ENCODE measurements at regions of chr2 and their contacts with region 1.

Region 1: GRCh38 chr2:68909793-68910674 is 38.8 kb upstream of the BMP10 start:
- DNase-seq: peak; percentile 29 to 65 (median 59)
- ATAC-seq: peak; percentile 52
- H3K4me3 ChIP-seq: no peak overlapping the region
- H3K4me3 Mint-ChIP-seq: no peak overlapping the region
- H3K27ac ChIP-seq: no peak overlapping the region
- H3K27ac Mint-ChIP-seq: peak overlapping the region in 2 of 9 donors; percentile 33 to 80
- H3K4me1 ChIP-seq: peaks cover 28 to 62% of the 10 kb centered on the region in 2 donors
- H3K4me1 Mint-ChIP-seq: peaks cover 22 to 35% (median 26%) of the 10 kb centered on the region in 7 donors
- H3K27me3 ChIP-seq: no peaks in the 10 kb centered on the region
- H3K27me3 Mint-ChIP-seq: no peaks in the 10 kb centered on the region

Region 2: GRCh38 chr2:68157402-68158133 is 752.5 kb before region 1 on chr2 and contains the start of gene PNO1:
- CTCF ChIA-PET with region 1: no interaction called
- POLR2A ChIA-PET with region 1: no interaction called
- intact Hi-C with region 1: loop called in 1 of 2 experiments (anchors 1 kb)
- DNase-seq: peak; percentile 95 to 100 (median 98)
- ATAC-seq: peak; percentile 98
- H3K4me3 ChIP-seq: peak within 1 kb of the TSS; percentile 93
- H3K4me3 Mint-ChIP-seq: peak within 1 kb of the TSS; percentile 84 to 99 (median 94)
- H3K27ac ChIP-seq: peak within 1 kb of the TSS; percentile 87
- H3K27ac Mint-ChIP-seq: peak within 1 kb of the TSS; percentile 96 to 100 (median 99)
- H3K4me1 ChIP-seq: peaks cover 19 to 38% of the 10 kb centered on the region in 2 donors
- H3K4me1 Mint-ChIP-seq: peaks cover 30 to 72% (median 58%) of the 10 kb centered on the region in 7 donors
- H3K27me3 ChIP-seq: no peaks in the 10 kb centered on the region
- H3K27me3 Mint-ChIP-seq: no peaks in the 10 kb centered on the region
- total RNA-seq, gene PNO1: 11.0 to 31.0 (median 12.8) TPM

Region 3: DNA sequence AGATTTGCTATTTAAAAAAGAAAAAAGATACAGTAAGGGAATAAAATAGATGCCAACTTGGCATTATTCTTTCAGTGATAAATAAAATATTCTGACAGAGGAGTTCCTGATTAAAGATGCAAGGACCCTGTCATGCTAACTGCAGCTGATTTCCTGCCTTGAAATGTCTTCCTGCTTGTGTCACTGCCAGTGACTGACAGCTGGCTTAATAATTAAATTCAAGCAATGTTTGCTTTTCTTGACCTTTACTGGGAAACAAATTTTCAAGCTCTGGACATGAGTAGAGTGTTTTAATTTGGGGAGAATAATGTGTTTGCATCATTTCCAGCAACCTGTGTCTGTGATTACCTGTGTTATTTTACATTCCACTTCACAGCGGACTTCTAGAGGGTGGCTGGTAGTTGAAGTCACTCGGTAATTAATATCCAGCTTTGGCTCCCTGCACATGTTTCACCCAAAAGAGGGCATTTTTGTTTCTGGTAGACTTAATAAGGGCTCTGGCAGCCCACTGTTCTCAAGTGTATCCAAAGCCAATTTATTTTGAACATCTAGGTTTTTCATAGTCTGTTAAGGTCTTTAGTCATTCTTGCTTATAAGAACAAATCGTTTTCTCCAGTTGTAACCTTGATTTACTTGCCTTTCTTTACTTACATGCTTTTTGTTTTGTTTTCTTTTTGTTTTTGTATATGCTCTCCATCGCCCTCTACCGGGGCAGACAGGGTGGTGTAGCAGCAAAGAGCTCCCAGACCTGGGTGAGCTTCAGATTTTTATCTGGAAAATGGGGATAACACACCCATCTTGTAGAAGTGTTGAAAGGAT is 315.2 kb before region 1 on chr2:
- CTCF ChIA-PET with region 1: interaction called, 5 read pairs
- POLR2A ChIA-PET with region 1: no interaction called
- intact Hi-C with region 1: loop called in 1 of 2 experiments (anchors 5 kb)
- DNase-seq: peak; percentile 5 to 46 (median 39)
- ATAC-seq: peak; percentile 74
- H3K4me3 ChIP-seq: no peak overlapping the region
- H3K4me3 Mint-ChIP-seq: peak overlapping the region in 3 of 10 donors; percentile 2 to 23 (median 4)
- H3K27ac ChIP-seq: no peak overlapping the region
- H3K27ac Mint-ChIP-seq: peak overlapping the region in 2 of 9 donors; percentile 1 to 5
- H3K4me1 ChIP-seq: no peaks in the 10 kb centered on the region
- H3K4me1 Mint-ChIP-seq: peaks cover 3 to 10% (median 7%) of the 10 kb centered on the region in 7 donors
- H3K27me3 ChIP-seq: no peaks in the 10 kb centered on the region
- H3K27me3 Mint-ChIP-seq: peaks cover 3 to 25% (median 16%) of the 10 kb centered on the region in 5 donors

Region 4: DNA sequence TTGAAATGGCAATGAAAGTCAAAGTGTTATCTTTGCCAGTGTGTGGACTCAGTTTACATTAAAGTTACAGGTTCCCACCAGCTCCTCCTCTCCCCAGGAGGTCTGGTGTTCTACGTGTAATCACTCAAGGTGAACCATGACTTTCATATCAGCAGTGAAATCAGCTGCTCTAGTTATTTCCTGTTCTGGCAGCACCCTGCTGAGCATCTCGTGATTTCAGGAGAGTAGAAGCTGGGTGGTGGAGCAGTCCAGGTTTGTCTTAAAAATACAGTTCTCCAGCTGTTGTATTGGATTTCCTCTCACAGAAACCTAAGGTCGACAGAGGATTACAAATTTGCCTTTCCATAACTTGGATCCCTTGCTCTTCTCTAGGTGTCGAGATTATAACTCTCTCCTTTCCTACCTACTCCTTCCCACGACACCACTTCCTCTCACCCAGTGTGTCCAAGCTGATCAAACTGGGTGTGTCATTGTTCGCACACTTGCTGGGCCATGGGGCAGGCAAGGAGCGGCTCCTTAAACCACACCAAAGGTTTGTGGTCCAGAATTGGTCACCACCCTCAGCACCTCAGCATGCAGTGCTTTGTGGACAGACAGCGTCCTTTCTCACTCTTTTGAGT is 188.4 kb before region 1 on chr2:
- CTCF ChIA-PET with region 1: interaction called, 9 read pairs
- POLR2A ChIA-PET with region 1: interaction called, 6 read pairs
- intact Hi-C with region 1: loop called in 1 of 2 experiments (anchors 1 kb)
- DNase-seq: peak in 7 of 9 donors; percentile 52 to 69 (median 61)
- ATAC-seq: peak; percentile 83
- H3K4me3 ChIP-seq: peak overlapping the region; percentile 9
- H3K4me3 Mint-ChIP-seq: peak overlapping the region; percentile 76 to 91 (median 82)
- H3K27ac ChIP-seq: peak overlapping the region; percentile 68
- H3K27ac Mint-ChIP-seq: peak overlapping the region; percentile 78 to 97 (median 95)
- H3K4me1 ChIP-seq: peaks cover 72 to 87% of the 10 kb centered on the region in 2 donors
- H3K4me1 Mint-ChIP-seq: peaks cover 65 to 96% (median 93%) of the 10 kb centered on the region in 7 donors
- H3K27me3 ChIP-seq: no peaks in the 10 kb centered on the region
- H3K27me3 Mint-ChIP-seq: no peaks in the 10 kb centered on the region

Region 5: DNA sequence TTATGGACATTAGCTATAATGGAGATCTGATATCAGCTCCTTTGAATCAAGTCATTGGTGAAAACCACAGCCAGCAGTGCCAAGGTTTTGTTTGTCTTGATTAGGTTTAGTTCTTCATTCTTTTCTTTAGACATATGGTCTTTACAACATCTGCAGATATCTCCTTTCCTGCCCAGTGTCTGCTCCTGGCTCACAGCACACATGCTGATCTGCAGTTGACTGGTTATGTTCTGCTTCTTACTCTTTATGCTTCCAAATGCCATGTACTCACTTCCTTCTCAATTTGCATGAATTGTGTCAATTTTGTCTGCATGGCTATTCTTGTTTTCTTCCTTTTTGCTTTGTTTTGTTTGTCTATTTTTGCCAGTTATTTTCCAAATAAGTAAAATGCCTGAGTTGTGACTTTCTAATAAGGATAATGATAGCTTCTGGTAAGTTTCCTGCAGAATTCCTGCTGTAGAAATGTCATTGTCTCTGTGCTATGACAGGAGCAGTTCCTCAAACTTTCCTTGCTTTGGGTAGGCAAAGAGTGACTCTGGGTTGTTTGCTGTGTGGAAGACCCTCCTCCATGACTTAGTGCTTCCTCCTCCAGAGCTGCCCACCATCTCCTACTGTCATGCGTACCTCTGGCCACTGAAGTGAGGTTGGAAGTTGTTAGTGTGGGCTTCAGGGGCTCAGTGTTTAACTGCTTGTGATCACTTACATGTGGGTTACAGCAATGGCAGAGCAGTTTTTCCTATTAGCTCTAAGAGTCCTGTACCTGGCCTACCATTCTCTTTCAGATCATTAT is 167.2 kb before region 1 on chr2:
- CTCF ChIA-PET with region 1: interaction called, 64 read pairs
- POLR2A ChIA-PET with region 1: interaction called, 13 read pairs
- intact Hi-C with region 1: loop called in 1 of 2 experiments (anchors 5 kb)
- DNase-seq: no peak
- ATAC-seq: no peak
- H3K4me3 ChIP-seq: peak overlapping the region; percentile 27
- H3K4me3 Mint-ChIP-seq: peak overlapping the region in 8 of 10 donors; percentile 43 to 82 (median 67)
- H3K27ac ChIP-seq: peak overlapping the region; percentile 5
- H3K27ac Mint-ChIP-seq: peak overlapping the region in 8 of 9 donors; percentile 42 to 87 (median 76)
- H3K4me1 ChIP-seq: peaks cover 93% of the 10 kb centered on the region in 2 donors
- H3K4me1 Mint-ChIP-seq: peaks cover 69 to 98% (median 93%) of the 10 kb centered on the region in 7 donors
- H3K27me3 ChIP-seq: no peaks in the 10 kb centered on the region
- H3K27me3 Mint-ChIP-seq: no peaks in the 10 kb centered on the region

Region 6: DNA sequence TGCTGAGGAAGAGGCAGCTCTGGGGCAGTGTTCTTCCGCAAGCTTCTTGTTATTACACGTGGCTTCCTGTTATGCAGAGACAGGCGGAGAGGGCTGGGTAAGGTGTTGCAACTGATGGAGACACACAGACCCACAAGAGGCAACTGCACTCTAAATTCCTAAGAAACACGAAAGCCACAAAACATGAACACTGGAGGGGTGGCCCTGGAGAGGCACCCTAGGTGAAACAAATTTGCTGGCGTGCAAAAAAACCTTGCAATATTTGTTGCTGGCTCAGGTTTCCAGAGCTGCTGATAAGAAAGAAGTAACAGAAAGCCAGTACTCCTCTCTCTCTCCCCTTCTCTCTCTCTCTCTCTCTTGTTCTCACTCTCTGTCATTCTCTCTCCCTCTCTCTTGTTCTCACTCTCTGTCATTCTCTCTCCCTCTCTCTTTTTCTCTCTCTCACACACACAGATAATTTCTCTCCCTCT is 143.6 kb before region 1 on chr2:
- CTCF ChIA-PET with region 1: interaction called, 6 read pairs
- POLR2A ChIA-PET with region 1: interaction called, 7 read pairs
- intact Hi-C with region 1: loop called in 1 of 2 experiments (anchors 1 kb)
- DNase-seq: peak; percentile 27 to 85 (median 78)
- ATAC-seq: peak; percentile 86
- H3K4me3 ChIP-seq: peak overlapping the region; percentile 36
- H3K4me3 Mint-ChIP-seq: peak overlapping the region; percentile 77 to 94 (median 82)
- H3K27ac ChIP-seq: peak overlapping the region; percentile 82
- H3K27ac Mint-ChIP-seq: peak overlapping the region in 8 of 9 donors; percentile 93 to 99 (median 97)
- H3K4me1 ChIP-seq: peaks cover 97 to 98% of the 10 kb centered on the region in 2 donors
- H3K4me1 Mint-ChIP-seq: peaks cover 70 to 100% (median 99%) of the 10 kb centered on the region in 7 donors
- H3K27me3 ChIP-seq: no peaks in the 10 kb centered on the region
- H3K27me3 Mint-ChIP-seq: no peaks in the 10 kb centered on the region

Region 7: GRCh38 chr2:68837164-68837860 is 72.7 kb before region 1 on chr2:
- CTCF ChIA-PET with region 1: interaction called, 7 read pairs
- POLR2A ChIA-PET with region 1: interaction called, 3 read pairs
- intact Hi-C with region 1: loop called (anchors 1 kb)
- DNase-seq: peak; percentile 25 to 67 (median 57)
- ATAC-seq: peak; percentile 77
- H3K4me3 ChIP-seq: no peak overlapping the region
- H3K4me3 Mint-ChIP-seq: no peak overlapping the region
- H3K27ac ChIP-seq: no peak overlapping the region
- H3K27ac Mint-ChIP-seq: peak overlapping the region in 2 of 9 donors; percentile 15 to 75
- H3K4me1 ChIP-seq: peaks cover 0 to 13% of the 10 kb centered on the region in 2 donors
- H3K4me1 Mint-ChIP-seq: peaks cover 15 to 51% (median 43%) of the 10 kb centered on the region in 7 donors
- H3K27me3 ChIP-seq: no peaks in the 10 kb centered on the region
- H3K27me3 Mint-ChIP-seq: no peaks in the 10 kb centered on the region

Measured in naive thymus-derived CD4-positive, alpha-beta T cell (primary cell).